Activated naive CD8-positive, alpha-beta T cell treated with anti-CD3 and anti-CD28 coated beads, Interleukin-2, amount 10 ng/mL, durations not matched to agents 7 days and 5 days (primary cell): ENCODE measurements at regions of chr4 and their contacts with region 1.

Region 1: GRCh38 chr4:473570-474457 is 25.1 kb downstream of the ZNF721 start:
- DNase-seq: peak; percentile 88
- ATAC-seq: peak; percentile 99
- H3K4me3 Mint-ChIP-seq: peak overlapping the region; percentile 96
- H3K27ac Mint-ChIP-seq: peak overlapping the region; percentile 95
- H3K4me1 Mint-ChIP-seq: peaks cover 20% of the 10 kb centered on the region
- H3K27me3 Mint-ChIP-seq: no peaks in the 10 kb centered on the region

Region 2: GRCh38 chr4:337143-337931 is 136.5 kb before region 1 on chr4 and contains the start of gene ZNF141:
- POLR2A ChIA-PET with region 1: interaction called, 13 read pairs
- DNase-seq: peak; percentile 83
- ATAC-seq: peak; percentile 95
- H3K4me3 Mint-ChIP-seq: peak within 1 kb of the TSS; percentile 96
- H3K27ac Mint-ChIP-seq: peak within 1 kb of the TSS; percentile 100
- H3K4me1 Mint-ChIP-seq: peaks cover 20% of the 10 kb centered on the region
- H3K27me3 Mint-ChIP-seq: peaks cover 3% of the 10 kb centered on the region
- total RNA-seq, gene ZNF141: 42.1 to 43.4 TPM

Region 3: DNA sequence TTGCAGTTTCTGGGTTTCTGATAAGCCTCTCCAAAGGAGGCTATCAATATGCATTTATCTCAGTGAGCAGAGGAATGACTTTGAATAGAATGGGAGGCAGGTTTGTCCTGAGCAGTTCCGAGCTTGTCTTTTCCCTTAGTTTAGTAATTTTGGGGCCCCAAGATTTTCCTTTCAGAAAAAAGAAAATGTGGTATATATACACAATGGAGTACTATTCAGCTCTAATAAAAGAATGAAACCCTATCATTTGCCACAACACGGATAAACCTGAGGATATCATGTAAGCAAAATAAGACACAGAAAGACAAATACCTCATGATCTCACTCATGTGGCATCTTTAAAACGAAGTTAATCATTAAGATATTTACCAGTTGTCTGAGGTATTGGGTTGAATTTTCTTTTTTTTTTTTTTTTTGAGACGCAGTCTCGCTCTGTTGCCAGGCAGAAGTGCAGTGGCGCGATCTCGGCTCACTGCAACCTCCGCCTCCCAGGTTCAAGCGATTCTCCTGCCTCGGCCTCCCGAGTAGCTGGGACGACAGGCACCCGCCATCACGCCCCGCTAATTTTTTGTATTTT is 24.6 kb after region 1 on chr4:
- POLR2A ChIA-PET with region 1: interaction called, 31 read pairs
- DNase-seq: no peak
- ATAC-seq: peak; percentile 35
- H3K4me3 Mint-ChIP-seq: peak overlapping the region; percentile 88
- H3K27ac Mint-ChIP-seq: peak overlapping the region; percentile 95
- H3K4me1 Mint-ChIP-seq: peaks cover 23% of the 10 kb centered on the region
- H3K27me3 Mint-ChIP-seq: no peaks in the 10 kb centered on the region

Region 4: DNA sequence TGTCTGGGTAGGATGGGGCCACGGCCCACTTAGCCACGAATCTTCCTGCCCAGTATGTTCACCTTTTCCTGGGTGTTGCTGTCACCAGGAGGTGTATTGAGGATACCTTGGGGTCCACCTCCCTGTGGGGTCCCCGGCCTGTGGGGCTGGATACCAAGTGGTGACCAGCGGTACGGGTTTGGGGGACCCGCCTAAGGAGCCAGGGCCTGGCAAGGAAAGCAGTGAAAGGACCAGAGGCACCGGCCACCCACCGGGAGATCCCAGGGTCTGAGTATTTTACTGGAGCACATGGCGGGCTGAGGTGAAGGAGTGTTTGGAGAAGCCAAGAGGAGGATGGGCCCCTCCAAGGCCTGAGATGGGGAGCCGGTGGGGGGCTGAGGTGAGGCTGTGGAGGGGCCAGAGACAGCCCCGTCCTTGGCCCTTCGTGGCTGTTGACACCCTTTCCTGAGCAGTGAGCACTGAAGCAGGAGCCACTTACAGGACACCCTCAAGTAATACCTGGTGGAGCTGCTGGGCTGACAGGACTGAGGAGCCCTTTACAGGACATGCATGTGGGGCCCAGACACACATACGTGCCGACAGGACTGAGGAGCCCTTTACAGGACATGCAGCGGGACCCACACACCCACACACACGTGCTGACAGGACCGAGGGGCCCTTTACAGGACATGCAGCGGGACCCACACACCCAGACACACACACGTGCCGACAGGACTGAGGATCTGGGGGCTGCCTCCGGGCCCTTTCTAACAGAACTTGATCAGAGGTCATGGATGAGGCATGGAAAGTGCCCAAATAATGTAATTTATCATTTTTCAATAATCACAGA is 63.8 kb after region 1 on chr4:
- POLR2A ChIA-PET with region 1: no interaction called
- DNase-seq: peak; percentile 14
- ATAC-seq: no peak
- H3K4me3 Mint-ChIP-seq: no peak overlapping the region
- H3K27ac Mint-ChIP-seq: no peak overlapping the region
- H3K4me1 Mint-ChIP-seq: no peaks in the 10 kb centered on the region
- H3K27me3 Mint-ChIP-seq: no peaks in the 10 kb centered on the region